Activated CD8-positive, alpha-beta memory T cell treated with anti-CD3 and anti-CD28 coated beads, Interleukin-2, amount 10 ng/mL, durations not matched to agents 7 days and 5 days (primary cell): ENCODE measurements at regions of chr1 and their contacts with region 1.

Region 1: DNA sequence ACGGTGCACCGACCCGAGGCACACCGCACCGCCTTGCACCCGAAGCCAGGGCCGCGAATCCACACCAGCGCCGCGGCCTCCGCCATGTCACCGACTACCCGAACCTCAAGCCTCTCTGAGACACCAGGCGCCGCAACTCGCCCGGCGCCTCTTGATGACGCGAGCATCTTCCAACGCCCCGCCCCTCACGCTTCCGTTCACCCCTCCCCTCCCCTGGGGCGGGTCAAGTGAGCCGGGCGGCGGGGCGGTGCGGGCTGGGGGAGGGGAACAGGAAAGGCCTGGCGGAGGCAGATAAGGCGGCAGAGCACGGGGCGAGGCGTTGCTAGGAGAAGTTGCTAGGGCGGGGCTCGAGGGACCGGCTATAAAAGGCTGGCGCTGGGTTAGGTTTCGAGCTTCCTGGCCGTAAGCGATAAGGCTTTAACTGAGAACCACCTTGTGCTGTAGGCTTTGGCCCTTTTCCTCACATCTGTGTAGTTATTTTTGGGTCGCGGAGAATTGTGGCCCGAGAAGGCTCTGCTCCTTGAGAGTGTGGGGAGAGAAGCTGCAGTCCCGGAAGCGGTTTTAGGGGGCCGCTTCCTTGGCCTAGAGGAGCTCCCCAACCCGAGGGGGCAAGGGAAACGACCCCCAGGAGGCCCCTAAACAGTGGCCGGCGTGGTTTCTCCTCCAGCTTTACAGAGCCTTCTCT is at the start of gene SDE2:
- DNase-seq: peak; percentile 100
- ATAC-seq: peak; percentile 89
- H3K4me3 Mint-ChIP-seq: peak within 1 kb of the TSS; percentile 98
- H3K27ac Mint-ChIP-seq: peak within 1 kb of the TSS; percentile 100
- H3K4me1 Mint-ChIP-seq: peaks cover 66% of the 10 kb centered on the region
- H3K27me3 Mint-ChIP-seq: no peaks in the 10 kb centered on the region
- total RNA-seq, gene SDE2: 16.6 to 20.9 TPM

Region 2: GRCh38 chr1:225888898-225889601 is 110.3 kb before region 1 on chr1 and contains the start of gene LEFTY1:
- CTCF ChIA-PET with region 1: no interaction called
- DNase-seq: no peak
- ATAC-seq: no peak
- H3K4me3 Mint-ChIP-seq: no peak within 1 kb of the TSS
- H3K27ac Mint-ChIP-seq: no peak within 1 kb of the TSS
- H3K4me1 Mint-ChIP-seq: no peaks in the 10 kb centered on the region
- H3K27me3 Mint-ChIP-seq: peaks cover 6% of the 10 kb centered on the region
- total RNA-seq, gene LEFTY1: not detected

Region 3: DNA sequence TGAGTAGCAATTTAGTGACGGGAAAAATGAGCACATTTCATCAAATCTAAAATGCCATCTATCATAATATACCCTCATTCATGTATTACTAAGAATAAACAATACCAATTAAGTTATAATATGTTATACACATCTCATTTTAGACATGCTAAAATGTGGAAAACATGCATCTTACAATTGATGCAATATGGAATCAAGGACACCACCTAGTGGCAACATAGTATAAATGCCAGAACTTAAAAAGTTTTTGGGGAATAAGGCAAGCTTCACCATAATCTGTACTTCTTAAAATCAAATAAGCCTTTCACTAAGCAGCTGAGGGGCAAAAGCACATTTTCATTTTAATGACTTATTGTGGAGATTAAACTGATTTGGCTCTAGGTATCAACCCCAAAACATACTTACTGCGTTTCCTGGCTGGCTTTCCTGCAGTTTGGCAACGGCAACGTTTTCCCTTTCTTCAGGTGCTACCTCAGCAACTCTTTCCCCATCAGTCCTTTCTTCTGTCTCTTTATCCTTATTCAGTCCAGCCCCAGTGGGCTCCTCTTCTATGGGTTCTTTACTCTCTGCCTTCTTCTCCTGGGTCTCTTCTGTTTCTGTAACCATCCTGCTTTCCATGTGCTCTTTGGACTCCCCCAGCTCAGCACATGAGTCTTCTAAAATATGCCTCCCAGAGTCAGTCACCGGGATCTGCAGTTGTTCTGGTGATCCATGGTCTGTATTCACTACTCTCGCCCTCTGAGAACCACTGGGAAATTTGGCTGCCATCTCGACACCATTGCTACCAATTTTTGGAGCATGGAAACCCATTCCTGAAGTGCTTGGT is 11.7 kb before region 1 on chr1:
- CTCF ChIA-PET with region 1: interaction called, 21 read pairs
- DNase-seq: no peak
- ATAC-seq: no peak
- H3K4me3 Mint-ChIP-seq: no peak overlapping the region
- H3K27ac Mint-ChIP-seq: no peak overlapping the region
- H3K4me1 Mint-ChIP-seq: peaks cover 32% of the 10 kb centered on the region
- H3K27me3 Mint-ChIP-seq: no peaks in the 10 kb centered on the region

Region 4: DNA sequence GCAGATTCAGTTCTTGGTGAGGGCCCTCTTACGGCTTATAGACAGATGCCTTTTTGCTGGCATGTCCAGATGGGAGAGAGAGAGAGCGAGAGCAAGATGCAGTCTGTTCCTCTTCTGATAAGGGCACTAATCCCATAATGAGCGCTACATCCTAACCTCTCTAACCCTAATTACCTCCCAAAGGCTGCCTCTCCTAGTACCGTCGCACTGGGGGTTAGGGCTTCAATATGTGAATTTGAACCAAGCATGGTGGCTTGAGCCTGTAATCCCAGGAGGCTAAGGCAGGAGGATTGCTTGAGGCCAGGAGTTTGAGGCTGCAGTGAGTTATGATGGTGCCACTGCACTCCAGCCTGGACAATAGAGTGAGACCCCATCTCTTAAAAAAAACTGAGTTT is 10.3 kb after region 1 on chr1:
- CTCF ChIA-PET with region 1: no interaction called
- DNase-seq: no peak
- ATAC-seq: no peak
- H3K4me3 Mint-ChIP-seq: no peak overlapping the region
- H3K27ac Mint-ChIP-seq: no peak overlapping the region
- H3K4me1 Mint-ChIP-seq: peaks cover 8% of the 10 kb centered on the region
- H3K27me3 Mint-ChIP-seq: peaks cover 9% of the 10 kb centered on the region

Region 5: DNA sequence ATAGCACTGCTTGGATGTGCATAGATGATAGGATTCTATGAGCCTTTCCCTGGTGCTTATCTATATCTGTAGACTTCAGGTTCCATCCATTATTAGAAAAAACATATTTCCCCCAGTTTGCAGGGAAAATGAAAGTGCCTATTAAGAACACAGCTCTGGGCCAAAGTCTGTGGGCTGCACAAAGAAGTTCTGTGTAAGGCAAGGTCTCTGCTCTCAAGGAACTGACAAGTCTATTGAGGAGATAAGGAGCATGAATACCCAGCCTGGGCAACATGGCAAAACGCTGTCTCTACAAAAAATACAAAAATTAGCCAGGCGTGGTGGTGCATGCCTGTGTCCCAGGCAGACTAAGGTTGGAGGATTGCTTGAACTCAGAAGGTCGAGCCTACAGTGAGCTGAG is 22.0 kb after region 1 on chr1:
- CTCF ChIA-PET with region 1: no interaction called
- DNase-seq: no peak
- ATAC-seq: no peak
- H3K4me3 Mint-ChIP-seq: no peak overlapping the region
- H3K27ac Mint-ChIP-seq: no peak overlapping the region
- H3K4me1 Mint-ChIP-seq: no peaks in the 10 kb centered on the region
- H3K27me3 Mint-ChIP-seq: peaks cover 14% of the 10 kb centered on the region